Common myeloid progenitor, CD34-positive (primary cell): ENCODE measurements at regions of chr17 and their contacts with region 1.

Region 1: GRCh38 chr17:68172461-68172954 is 75.3 kb upstream of the AMZ2 start:
- DNase-seq: peak; percentile 65 to 83 (median 78)
- H3K4me3 ChIP-seq: no peak overlapping the region
- H3K27ac ChIP-seq: no peak overlapping the region
- H3K4me1 ChIP-seq: peaks cover 0 to 9% (median 2%) of the 10 kb centered on the region in 4 experiments
- H3K27me3 ChIP-seq: peaks cover 0 to 3% (median 0%) of the 10 kb centered on the region in 5 experiments

Region 2: DNA sequence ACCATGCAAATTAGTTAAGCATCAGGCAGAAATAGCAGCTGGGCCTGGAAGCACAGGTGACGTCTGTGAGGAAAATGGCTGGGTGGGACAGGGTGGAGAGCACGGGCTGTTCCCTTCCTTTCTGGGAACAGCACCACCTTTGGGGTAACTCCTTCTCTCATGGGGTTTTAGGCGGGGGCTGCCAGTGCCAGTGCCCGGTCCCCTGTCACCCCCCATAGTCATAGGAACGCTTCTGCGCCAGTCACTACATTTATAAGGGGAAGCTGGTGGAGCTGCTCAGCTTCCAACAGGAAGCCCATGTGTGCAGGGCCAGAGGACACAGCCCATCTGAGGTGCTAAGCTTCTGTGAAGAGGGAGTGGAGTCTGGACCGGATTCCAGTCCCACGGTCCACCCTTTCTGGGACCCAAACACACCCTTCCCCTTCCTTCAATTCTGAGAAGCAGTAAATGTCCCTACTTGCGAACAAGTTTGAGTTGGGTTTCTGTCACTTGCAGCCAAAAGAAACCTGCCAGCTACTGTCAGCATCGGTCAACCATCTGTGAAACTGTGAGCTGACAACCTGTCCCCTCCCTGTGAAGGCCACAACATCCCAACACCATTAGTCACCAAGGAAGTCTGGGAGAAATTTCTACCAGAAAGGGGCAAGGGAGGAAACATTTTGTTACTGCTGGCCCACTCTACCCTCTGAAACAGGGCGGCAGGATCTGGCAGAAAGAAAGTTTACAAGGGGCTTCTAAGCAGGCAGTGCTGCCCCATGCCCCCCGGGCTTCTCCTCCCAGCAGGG is 10.7 kb before region 1 on chr17:
- CTCF ChIA-PET with region 1: interaction called, 14 read pairs
- POLR2A ChIA-PET with region 1: interaction called, 3 read pairs
- DNase-seq: peak in 1 of 3 donors; percentile 31
- H3K4me3 ChIP-seq: no peak overlapping the region
- H3K27ac ChIP-seq: no peak overlapping the region
- H3K4me1 ChIP-seq: peaks cover 0 to 10% (median 2%) of the 10 kb centered on the region in 4 experiments
- H3K27me3 ChIP-seq: no peaks in the 10 kb centered on the region

Region 3: GRCh38 chr17:68184816-68185436 is 12.4 kb after region 1 on chr17:
- CTCF ChIA-PET with region 1: interaction called, 10 read pairs
- POLR2A ChIA-PET with region 1: interaction called, 3 read pairs
- DNase-seq: peak in 2 of 3 donors; percentile 53 to 57
- H3K4me3 ChIP-seq: no peak overlapping the region
- H3K27ac ChIP-seq: no peak overlapping the region
- H3K4me1 ChIP-seq: peaks cover 8 to 43% (median 38%) of the 10 kb centered on the region in 4 experiments
- H3K27me3 ChIP-seq: no peaks in the 10 kb centered on the region

Region 4: GRCh38 chr17:68205251-68205807 is 32.8 kb after region 1 on chr17:
- CTCF ChIA-PET with region 1: interaction called, 25 read pairs
- POLR2A ChIA-PET with region 1: no interaction called
- DNase-seq: peak; percentile 87 to 90 (median 90)
- H3K4me3 ChIP-seq: peak overlapping the region; percentile 62 to 91 (median 74)
- H3K27ac ChIP-seq: peak overlapping the region in 1 of 2 experiments; percentile 25
- H3K4me1 ChIP-seq: peaks cover 4 to 31% (median 21%) of the 10 kb centered on the region in 4 experiments
- H3K27me3 ChIP-seq: peaks cover 0 to 8% (median 0%) of the 10 kb centered on the region in 5 experiments

Region 5: DNA sequence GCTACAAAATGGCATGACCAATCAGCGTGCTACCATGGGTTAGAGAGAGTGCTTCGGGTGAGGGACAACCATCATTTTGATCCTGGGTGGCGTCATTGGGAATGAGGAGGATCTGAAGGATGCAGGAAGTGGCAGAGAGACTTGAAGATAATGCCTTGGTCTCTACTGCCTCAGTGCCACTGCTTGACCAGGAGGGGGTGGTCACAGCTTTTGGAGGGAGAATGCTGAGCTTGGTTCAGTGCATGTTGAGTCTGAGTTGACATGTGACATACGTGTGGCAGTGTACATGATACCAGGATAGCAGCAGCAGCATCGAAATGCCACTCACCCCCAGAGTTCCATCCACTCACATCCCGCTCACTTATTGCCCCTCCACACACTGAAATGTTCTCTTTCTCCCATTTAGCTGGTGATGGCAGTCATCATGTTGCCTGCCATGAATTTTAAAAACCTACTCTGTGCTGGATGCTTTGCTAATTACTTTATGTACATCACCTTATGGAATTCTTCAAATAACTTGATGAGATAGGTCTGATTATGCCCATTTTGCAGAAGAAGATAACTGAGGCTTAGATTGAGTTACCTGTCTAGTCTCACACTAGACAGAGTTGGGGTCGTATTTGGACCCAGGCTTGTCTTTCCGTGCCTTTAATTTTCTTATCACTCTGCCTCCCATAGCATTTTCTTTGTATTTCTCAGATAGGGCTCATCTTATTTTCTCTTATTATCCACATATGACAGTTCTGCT is 155.5 kb after region 1 on chr17:
- CTCF ChIA-PET with region 1: no interaction called
- POLR2A ChIA-PET with region 1: no interaction called
- DNase-seq: no peak
- H3K4me3 ChIP-seq: no peak overlapping the region
- H3K27ac ChIP-seq: no peak overlapping the region
- H3K4me1 ChIP-seq: peaks cover 0 to 2% (median 0%) of the 10 kb centered on the region in 4 experiments
- H3K27me3 ChIP-seq: peaks cover 0 to 3% (median 0%) of the 10 kb centered on the region in 5 experiments

Region 6: DNA sequence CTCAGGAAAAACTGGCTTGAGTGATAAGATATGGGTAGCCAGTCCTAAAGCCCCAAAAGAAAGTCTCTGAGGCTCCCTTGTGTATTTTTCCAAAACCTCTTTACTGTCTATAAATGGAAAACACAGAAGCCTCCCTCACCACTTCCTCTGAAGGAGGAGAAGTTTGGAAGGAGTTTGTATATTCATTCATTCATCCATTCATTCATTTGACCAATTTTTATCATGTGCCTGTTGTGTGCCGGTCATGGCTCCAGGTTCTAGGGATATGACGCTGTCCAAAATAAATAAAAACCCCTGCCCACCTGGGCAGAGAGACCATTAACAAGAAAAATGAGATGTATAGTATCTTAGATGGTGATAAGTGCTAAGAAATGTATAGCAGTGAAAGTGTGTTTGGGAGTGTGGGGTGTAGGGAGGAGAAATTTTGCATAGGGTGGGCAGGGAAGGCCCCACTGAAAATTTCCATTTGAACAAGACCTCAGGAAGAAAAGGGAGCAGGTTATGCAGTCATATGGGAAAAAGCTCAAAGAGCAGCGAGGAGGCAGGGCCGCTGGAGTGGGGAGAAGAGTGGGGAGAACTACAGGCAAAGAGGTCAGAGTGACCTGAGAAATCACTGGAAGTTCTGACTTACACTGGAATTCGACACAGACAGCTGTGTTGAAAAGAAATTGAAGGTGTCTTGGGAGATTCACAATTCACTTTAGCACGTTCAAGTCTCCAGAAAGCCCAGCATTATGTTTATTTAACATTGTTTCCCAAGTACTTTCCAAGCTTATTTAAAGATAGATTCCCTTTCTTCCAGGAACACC is 290.9 kb after region 1 on chr17:
- CTCF ChIA-PET with region 1: interaction called, 21 read pairs
- POLR2A ChIA-PET with region 1: no interaction called
- DNase-seq: no peak
- H3K4me3 ChIP-seq: no peak overlapping the region
- H3K27ac ChIP-seq: no peak overlapping the region
- H3K4me1 ChIP-seq: peaks cover 17 to 34% (median 28%) of the 10 kb centered on the region in 4 experiments
- H3K27me3 ChIP-seq: no peaks in the 10 kb centered on the region

Region 7: DNA sequence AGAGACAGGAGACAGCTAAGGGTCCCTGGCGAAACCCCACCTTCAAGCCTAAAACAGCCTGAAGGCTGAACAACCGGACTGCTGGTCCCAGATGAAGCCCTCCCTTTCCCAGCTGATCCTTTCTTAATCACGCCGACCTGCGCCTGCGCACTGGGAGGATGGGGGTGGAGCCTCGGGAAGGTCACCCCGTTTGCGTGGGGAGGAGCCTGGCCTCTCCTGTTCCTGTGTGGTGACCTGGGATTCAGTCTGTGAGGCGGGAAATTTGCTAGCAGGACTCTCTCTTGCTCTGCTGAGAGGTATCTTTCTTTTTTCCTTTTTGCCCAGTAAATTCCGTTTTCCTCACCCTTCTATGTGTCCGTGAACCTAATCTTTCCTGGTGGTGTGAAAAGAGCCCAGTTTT is 419.1 kb after region 1 on chr17:
- CTCF ChIA-PET with region 1: no interaction called
- POLR2A ChIA-PET with region 1: no interaction called
- DNase-seq: no peak
- H3K4me3 ChIP-seq: peak overlapping the region in 1 of 7 experiments; percentile 21
- H3K27ac ChIP-seq: no peak overlapping the region
- H3K4me1 ChIP-seq: peaks cover 0 to 4% (median 0%) of the 10 kb centered on the region in 4 experiments
- H3K27me3 ChIP-seq: peaks cover 1 to 28% (median 7%) of the 10 kb centered on the region in 5 experiments